Endothelial cell of umbilical vein (primary cell): ENCODE measurements at regions of chr6 and their contacts with region 1.

Region 1: DNA sequence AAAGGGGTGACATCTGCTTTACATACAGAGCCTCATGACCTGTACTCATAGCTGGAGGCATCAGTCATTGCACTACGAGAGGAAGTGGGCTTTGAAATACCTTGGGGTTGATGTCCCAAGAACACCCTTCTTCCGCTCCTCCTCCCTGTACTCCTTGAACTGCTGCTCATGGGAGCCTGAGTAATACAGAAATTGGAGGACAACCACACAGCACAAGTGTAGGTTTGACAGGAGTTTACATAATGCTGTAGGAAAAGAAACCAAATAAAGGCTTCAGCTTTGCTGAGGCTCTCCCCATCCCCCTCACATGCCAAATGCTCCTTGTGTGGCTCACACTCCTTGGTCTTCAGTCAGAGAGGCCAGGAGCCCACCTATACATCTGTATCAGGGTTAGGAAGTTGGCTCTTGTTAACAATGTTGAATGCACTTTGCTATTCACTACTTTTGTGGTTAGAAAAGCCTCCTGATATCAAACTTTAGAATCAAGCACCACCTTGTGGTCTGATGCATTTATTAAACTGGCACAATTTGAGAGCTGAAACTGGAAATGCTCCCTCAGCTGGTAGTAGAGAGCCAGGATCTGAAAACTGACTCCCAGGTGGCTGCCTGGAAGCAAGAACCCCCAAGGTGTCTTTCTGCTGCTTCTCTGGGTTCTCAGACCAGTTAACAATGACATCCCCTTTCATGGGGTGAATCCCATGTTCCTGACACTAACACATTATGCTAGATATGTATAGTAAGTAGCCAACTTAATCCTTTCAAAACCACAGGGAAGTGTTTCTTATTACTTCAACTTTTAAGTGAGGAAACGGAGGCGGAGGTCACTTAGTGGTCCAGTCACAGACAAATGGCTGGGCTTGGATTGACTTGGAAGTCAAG is 56.2 kb upstream of the EDN1 start:
- DNase-seq: peak; percentile 86
- H3K4me3 ChIP-seq: no peak overlapping the region
- H3K27ac ChIP-seq: no peak overlapping the region
- H3K4me1 ChIP-seq: no peaks in the 10 kb centered on the region
- H3K27me3 ChIP-seq: no peaks in the 10 kb centered on the region
- CTCF ChIP-seq: peak; percentile 59 to 73
- POLR2A ChIP-seq: no peak

Region 2: GRCh38 chr6:11618533-11618932 is 615.4 kb before region 1 on chr6:
- CTCF ChIA-PET with region 1: interaction called, 20 read pairs
- POLR2A ChIA-PET with region 1: no interaction called
- dilution Hi-C with region 1: no loop called
- intact Hi-C with region 1: no loop called
- DNase-seq: peak; percentile 65
- H3K4me3 ChIP-seq: no peak overlapping the region
- H3K27ac ChIP-seq: peak overlapping the region; percentile 30
- H3K4me1 ChIP-seq: peaks cover 34% of the 10 kb centered on the region
- H3K27me3 ChIP-seq: no peaks in the 10 kb centered on the region
- CTCF ChIP-seq: peak; percentile 14 to 26
- POLR2A ChIP-seq: no peak

Region 3: GRCh38 chr6:12060780-12061619 is 172.9 kb before region 1 on chr6:
- CTCF ChIA-PET with region 1: interaction called, 16 read pairs
- POLR2A ChIA-PET with region 1: no interaction called
- dilution Hi-C with region 1: no loop called
- intact Hi-C with region 1: loop called (anchors 5 kb)
- DNase-seq: no peak
- H3K4me3 ChIP-seq: no peak overlapping the region
- H3K27ac ChIP-seq: no peak overlapping the region
- H3K4me1 ChIP-seq: peaks cover 4% of the 10 kb centered on the region
- H3K27me3 ChIP-seq: no peaks in the 10 kb centered on the region
- CTCF ChIP-seq: no peak
- POLR2A ChIP-seq: no peak

Region 4: GRCh38 chr6:12150812-12151432 is 83.0 kb before region 1 on chr6:
- CTCF ChIA-PET with region 1: interaction called, 9 read pairs
- POLR2A ChIA-PET with region 1: no interaction called
- dilution Hi-C with region 1: no loop called
- intact Hi-C with region 1: loop called (anchors 2 kb)
- DNase-seq: no peak
- H3K4me3 ChIP-seq: no peak overlapping the region
- H3K27ac ChIP-seq: no peak overlapping the region
- H3K4me1 ChIP-seq: peaks cover 24% of the 10 kb centered on the region
- H3K27me3 ChIP-seq: no peaks in the 10 kb centered on the region
- CTCF ChIP-seq: peak in 1 of 2 donors; percentile 28
- POLR2A ChIP-seq: no peak

Region 5: GRCh38 chr6:12245763-12246718 is 12.1 kb after region 1 on chr6:
- CTCF ChIA-PET with region 1: interaction called, 28 read pairs
- POLR2A ChIA-PET with region 1: no interaction called
- dilution Hi-C with region 1: no loop called
- intact Hi-C with region 1: no loop called
- DNase-seq: peak; percentile 89
- H3K4me3 ChIP-seq: no peak overlapping the region
- H3K27ac ChIP-seq: no peak overlapping the region
- H3K4me1 ChIP-seq: peaks cover 16% of the 10 kb centered on the region
- H3K27me3 ChIP-seq: no peaks in the 10 kb centered on the region
- CTCF ChIP-seq: no peak
- POLR2A ChIP-seq: peak; percentile 24